GM13977 (cell line): ENCODE measurements at regions of chr4 and their contacts with region 1.

Region 1: DNA sequence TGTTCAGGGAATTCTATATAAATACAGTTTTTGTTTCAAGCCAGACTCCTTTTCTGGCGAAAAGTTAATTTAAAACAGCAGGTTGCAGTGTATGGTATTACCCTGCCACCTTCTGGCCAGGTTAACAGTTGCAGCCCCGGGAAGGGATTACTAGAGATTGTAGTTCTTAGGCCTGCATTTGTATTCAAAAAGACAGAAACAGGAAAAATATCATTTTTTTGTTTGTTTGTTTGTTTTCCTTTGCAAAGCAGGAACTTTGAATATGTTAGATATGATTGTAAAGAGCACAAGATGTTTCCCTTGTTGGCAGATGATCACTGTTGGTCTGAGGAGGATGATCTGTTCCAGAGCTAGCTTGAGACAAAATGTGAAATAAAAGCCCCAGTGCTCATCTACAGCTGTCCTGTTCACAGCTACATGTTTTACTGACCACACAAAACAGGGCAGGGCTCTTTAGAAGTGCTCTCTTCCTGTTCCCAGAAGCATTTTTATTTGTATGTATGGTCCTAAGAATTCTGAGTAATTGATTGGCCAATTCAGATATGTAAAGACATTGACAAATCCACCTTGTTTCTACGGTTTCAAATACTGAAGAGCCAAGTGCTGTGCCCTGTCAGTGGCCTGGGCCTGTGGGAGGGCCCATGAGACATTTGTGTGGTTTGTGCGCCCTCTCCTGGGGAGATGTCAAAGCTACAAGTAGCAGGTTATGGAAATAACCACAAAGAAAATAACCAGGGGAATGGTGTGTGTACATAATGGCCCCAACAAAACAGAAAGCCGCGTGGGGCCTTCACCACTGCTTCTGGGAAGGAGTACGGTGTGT is 57.9 kb downstream of the CLDN22 start:
- DNase-seq: peak; percentile 68
- CTCF ChIP-seq: peak; percentile 82

Region 2: DNA sequence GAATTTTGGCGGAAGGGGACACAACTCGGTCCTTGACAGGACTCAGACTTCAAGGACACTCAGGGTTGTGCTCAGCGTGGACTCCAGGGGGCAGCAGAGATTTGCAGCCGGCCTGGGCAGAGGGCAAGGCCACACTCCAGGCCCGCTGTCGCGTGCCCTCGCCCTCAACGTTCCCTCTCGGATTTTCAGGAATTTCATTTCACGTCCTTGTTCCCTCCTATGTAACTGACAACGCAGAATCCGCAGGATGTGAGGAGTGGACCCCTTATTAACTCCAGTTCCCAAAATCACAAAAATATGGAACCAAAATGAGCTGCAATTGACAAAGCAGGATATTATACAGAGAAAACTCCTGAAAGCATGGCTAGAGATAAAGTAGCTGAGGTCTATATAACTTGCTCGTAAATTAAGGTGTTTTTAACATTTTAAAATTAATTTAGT is 323.9 kb before region 1 on chr4:
- in situ Hi-C with region 1: loop called (anchors 25 kb)
- DNase-seq: peak; percentile 69
- CTCF ChIP-seq: peak; percentile 97

Region 3: DNA sequence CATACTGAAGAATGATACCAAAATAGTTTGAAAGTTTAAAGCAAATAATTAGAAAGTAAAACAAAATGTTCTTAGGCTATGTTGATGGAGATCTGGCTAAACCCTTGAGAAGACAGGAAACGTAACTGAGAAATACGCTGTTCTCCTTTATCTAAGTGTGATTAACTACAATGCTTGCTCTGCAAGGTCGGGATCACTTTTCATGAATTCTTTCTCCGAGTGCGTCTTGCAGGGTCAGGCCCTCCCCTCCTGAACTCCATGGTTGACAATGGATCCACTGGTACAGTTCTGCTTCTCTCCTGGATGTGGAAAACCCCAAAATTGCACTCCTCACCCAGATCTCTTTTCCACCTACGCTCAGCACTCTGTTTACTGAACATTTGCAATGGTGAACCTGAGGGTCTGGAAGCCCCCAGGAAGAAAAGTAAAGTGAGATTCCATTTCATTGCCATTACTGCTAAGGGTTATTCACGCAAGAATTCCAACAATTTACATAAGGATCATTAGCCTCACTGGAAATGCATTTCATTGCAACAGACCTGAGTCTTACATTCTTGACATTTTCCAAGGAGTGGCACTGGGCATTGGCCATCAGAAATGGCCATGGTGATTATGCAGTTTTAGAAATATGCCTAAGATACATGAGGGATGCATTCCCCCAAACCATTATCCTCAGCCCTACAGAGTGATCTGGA is 187.7 kb before region 1 on chr4:
- in situ Hi-C with region 1: loop called (anchors 10 kb)
- DNase-seq: no peak
- CTCF ChIP-seq: no peak